Posterior vena cava (tissue), 2 donors: ENCODE measurements at regions of chr14 and their contacts with region 1.

Region 1: DNA sequence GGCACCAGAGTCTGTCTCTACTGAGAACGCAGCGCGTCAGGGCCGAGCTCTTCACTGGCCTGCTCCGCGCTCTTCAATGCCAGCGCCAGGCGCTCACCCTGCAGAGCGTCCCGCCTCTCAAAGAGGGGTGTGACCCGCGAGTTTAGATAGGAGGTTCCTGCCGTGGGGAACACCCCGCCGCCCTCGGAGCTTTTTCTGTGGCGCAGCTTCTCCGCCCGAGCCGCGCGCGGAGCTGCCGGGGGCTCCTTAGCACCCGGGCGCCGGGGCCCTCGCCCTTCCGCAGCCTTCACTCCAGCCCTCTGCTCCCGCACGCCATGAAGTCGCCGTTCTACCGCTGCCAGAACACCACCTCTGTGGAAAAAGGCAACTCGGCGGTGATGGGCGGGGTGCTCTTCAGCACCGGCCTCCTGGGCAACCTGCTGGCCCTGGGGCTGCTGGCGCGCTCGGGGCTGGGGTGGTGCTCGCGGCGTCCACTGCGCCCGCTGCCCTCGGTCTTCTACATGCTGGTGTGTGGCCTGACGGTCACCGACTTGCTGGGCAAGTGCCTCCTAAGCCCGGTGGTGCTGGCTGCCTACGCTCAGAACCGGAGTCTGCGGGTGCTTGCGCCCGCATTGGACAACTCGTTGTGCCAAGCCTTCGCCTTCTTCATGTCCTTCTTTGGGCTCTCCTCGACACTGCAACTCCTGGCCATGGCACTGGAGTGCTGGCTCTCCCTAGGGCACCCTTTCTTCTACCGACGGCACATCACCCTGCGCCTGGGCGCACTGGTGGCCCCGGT is at the start of gene PTGDR:
- DNase-seq: peak; percentile 90
- total RNA-seq, gene PTGDR: 2.9 to 4.5 TPM

Region 2: DNA sequence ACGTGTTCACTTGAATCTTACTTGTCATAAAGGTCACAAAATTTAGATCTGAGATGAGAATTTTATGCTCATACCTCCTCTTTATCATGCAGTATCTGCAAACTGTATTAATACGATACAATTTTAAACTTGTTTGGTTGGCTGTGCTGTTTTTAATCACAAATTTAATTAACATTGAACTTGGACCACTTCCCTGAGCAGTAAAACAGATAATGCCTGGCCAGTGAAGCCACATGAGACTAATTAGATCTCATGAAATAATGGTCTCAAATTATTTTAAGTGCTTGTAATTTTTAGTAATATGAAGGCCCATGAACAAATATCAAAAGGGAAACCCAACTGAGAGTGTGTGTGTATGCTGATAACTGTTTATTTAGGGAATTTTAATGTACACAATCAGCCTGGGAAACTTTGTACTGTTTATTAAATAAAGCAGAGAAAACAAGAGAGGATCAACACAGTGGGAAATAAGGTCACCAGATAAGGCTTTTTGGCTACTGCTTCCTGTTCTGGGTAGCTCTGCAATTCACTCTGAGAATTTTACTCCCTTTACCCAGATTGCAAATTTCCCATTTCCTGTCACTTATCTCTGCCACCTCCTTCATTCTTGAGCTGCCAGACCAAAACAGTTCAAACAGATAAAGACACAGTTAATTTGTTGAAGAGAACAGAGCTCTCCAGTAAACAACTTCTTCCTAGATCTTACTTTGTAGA is 585.3 kb after region 1 on chr14:
- intact Hi-C with region 1: loop called in 1 of 2 experiments (anchors 5 kb)
- DNase-seq: no peak